H1 (cell line): ENCODE measurements at regions of chr21 and their contacts with region 1.

Region 1: DNA sequence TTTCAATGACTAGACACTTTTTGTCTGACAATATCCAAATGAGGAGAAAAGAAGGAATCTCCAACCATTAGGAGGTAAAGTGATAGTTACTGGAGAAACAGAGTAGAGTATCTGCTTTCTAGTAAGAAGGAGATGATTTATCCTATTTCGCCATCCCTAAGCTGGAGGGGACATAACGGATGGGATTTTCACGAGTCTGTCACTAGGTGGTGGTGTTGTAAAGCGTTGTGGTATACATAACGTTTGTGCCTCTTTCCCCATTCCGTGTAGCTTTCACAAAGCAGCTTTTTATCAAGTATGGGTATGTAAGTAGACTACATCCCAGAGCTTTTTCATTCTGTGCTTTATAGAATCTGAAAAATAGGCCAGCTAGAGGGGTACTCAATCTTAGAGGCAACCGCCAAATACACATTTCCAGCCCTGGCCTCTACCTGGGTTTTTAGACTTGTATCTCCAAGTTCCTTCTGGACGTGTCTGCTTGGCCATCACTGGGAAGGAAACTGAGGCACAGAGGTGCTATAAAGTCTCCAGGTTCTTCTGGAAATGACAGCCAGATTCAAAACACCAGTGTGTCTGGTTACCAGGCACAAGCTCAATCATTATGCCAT is 33.3 kb upstream of the FAM3B start:
- DNase-seq: no peak
- H3K4me3 ChIP-seq: no peak overlapping the region
- H3K27ac ChIP-seq: no peak overlapping the region
- H3K4me1 ChIP-seq: 0 out of 7 replicates have a peak, but pooled peaks cover 0 to 3% (median 0%) of the 10 kb centered on the region in 4 experiments
- H3K27me3 ChIP-seq: no peaks in the 10 kb centered on the region
- CTCF ChIP-seq: peak; percentile 17 to 82 (median 80)
- EP300 ChIP-seq: no peak
- POLR2A ChIP-seq: no peak
- RAD21 ChIP-seq: peak; percentile 95 to 96

Region 2: GRCh38 chr21:41167348-41168342 is 115.7 kb before region 1 on chr21 and contains the start of gene BACE2:
- CTCF ChIA-PET with region 1: interaction called, 16 read pairs
- POLR2A ChIA-PET with region 1: no interaction called
- DNase-seq: peak in 1 of 2 experiments; percentile 84
- H3K4me3 ChIP-seq: peak within 1 kb of the TSS; percentile 56 to 96 (median 66)
- H3K27ac ChIP-seq: no peak within 1 kb of the TSS
- H3K4me1 ChIP-seq: peaks cover 0 to 7% (median 4%) of the 10 kb centered on the region in 4 experiments; a peak in 4 of 7 replicates
- H3K27me3 ChIP-seq: peaks cover 0 to 31% (median 22%) of the 10 kb centered on the region in 4 experiments; a peak in 6 of 7 replicates
- CTCF ChIP-seq: peak; percentile 50 to 66 (median 52)
- EP300 ChIP-seq: peak in 1 of 2 experiments; percentile 39; a peak in 1 of 3 replicates
- POLR2A ChIP-seq: no peak
- RAD21 ChIP-seq: peak; percentile 4 to 43; a peak in 3 of 4 replicates
- total RNA-seq, gene BACE2: 8.1 and 9.9 TPM in 2 replicates

Region 3: GRCh38 chr21:41321211-41321907 is 38.0 kb after region 1 on chr21:
- CTCF ChIA-PET with region 1: interaction called, 23 read pairs
- POLR2A ChIA-PET with region 1: no interaction called
- DNase-seq: no peak
- H3K4me3 ChIP-seq: no peak overlapping the region
- H3K27ac ChIP-seq: no peak overlapping the region
- H3K4me1 ChIP-seq: peaks cover 0 to 8% (median 1%) of the 10 kb centered on the region in 4 experiments; a peak in 5 of 7 replicates
- H3K27me3 ChIP-seq: peaks cover 0 to 7% (median under 1%) of the 10 kb centered on the region in 4 experiments; a peak in 3 of 7 replicates
- CTCF ChIP-seq: no peak
- EP300 ChIP-seq: no peak
- POLR2A ChIP-seq: no peak
- RAD21 ChIP-seq: no peak

Region 4: GRCh38 chr21:41369105-41369919 is 86.0 kb after region 1 on chr21:
- CTCF ChIA-PET with region 1: interaction called, 72 read pairs
- POLR2A ChIA-PET with region 1: no interaction called
- DNase-seq: peak in 1 of 2 experiments; percentile 80
- H3K4me3 ChIP-seq: peak overlapping the region; percentile 24 to 59 (median 44); a peak in 7 of 8 replicates
- H3K27ac ChIP-seq: no peak overlapping the region
- H3K4me1 ChIP-seq: peaks cover 0 to 15% (median 3%) of the 10 kb centered on the region in 4 experiments; a peak in 5 of 7 replicates
- H3K27me3 ChIP-seq: peaks cover 0 to 1% (median 0%) of the 10 kb centered on the region in 4 experiments; a peak in 1 of 7 replicates
- CTCF ChIP-seq: peak; percentile 40 to 50 (median 45)
- EP300 ChIP-seq: no peak
- POLR2A ChIP-seq: no peak
- RAD21 ChIP-seq: peak; percentile 54 to 56

Region 5: DNA sequence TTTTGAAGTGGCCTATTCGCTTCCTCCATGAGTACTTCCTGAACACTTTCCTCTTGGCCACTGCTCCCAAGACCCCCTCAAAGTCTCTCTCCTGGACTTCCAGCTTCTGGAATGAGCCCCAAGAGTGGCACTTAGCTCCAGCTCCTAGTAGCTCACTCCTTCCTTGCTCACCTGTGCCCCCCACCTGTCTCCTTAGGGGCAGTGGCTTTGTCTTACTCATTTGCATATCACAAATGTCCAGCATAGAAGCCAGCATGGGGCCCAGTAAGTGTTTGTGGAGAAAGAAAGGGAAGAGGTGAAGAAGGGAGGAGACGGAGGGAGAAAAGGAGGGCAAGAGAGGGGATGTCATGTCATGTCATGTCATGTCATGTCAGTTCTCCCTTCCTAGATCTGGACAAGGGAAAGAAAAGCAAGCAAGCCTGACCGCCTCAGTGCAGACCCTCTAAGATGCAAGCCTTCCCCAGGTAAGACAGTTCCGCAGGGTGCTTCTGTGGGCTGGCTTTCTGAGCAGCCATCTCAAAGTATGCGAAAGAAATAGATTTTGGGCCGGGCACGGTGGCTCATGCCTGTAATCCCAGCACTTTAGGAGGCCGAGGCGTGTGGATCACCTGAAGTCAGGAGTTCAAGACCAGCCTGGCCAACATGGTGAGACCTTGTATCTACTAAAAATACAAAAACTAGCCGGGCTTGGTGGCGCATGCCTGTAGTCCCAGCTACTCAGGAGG is 135.8 kb after region 1 on chr21:
- CTCF ChIA-PET with region 1: interaction called, 11 read pairs
- POLR2A ChIA-PET with region 1: no interaction called
- DNase-seq: no peak
- H3K4me3 ChIP-seq: 0 out of 8 replicates have a peak overlapping the region, but pooled peaks of 1 of the 4 experiments have one; percentile 22
- H3K27ac ChIP-seq: no peak overlapping the region
- H3K4me1 ChIP-seq: peaks cover 9 to 15% (median 11%) of the 10 kb centered on the region in 4 experiments; a peak in 6 of 7 replicates
- H3K27me3 ChIP-seq: peaks cover 0 to 3% (median under 1%) of the 10 kb centered on the region in 4 experiments; a peak in 3 of 7 replicates
- CTCF ChIP-seq: no peak
- EP300 ChIP-seq: no peak
- POLR2A ChIP-seq: no peak
- RAD21 ChIP-seq: no peak

Region 6: GRCh38 chr21:41468871-41469270 is 185.6 kb after region 1 on chr21:
- CTCF ChIA-PET with region 1: interaction called, 15 read pairs
- POLR2A ChIA-PET with region 1: no interaction called
- DNase-seq: no peak
- H3K4me3 ChIP-seq: no peak overlapping the region
- H3K27ac ChIP-seq: no peak overlapping the region
- H3K4me1 ChIP-seq: no peaks in the 10 kb centered on the region; a peak in 1 of 7 replicates
- H3K27me3 ChIP-seq: no peaks in the 10 kb centered on the region
- CTCF ChIP-seq: no peak
- EP300 ChIP-seq: no peak
- POLR2A ChIP-seq: no peak
- RAD21 ChIP-seq: no peak